ENCODE measurements at regions of chr9 and their contacts with region 1.

Region 1: GRCh38 chr9:71858812-71859211 is 52.2 kb downstream of the ABHD17B start:
- DNase-seq: peak; percentile 3
- H3K4me3 Mint-ChIP-seq: peak overlapping the region; percentile 0
- H3K27ac Mint-ChIP-seq: peak overlapping the region; percentile 51
- H3K4me1 Mint-ChIP-seq: peaks cover 25% of the 10 kb centered on the region
- H3K27me3 Mint-ChIP-seq: no peaks in the 10 kb centered on the region

Region 2: DNA sequence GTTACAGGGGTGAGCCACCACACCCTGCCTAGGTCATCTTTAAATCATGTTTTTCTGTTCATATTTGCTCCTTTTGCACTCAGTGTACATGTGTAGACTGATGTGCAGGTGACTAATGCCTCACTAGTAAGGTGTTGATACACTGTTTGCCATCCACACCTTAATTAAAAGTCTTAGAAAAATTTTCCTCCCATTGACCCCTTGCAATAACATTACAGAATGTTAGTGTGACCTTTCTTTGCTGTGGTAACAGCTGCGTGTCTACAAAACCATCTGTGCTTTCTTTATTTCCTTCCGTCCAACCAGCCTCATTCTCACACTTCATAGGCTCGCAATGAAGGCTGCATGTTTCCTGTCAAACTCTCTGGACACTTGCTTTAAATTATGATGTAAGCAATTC is 83.9 kb before region 1 on chr9:
- intact Hi-C with region 1: no loop called
- DNase-seq: no peak
- H3K4me3 Mint-ChIP-seq: no peak overlapping the region
- H3K27ac Mint-ChIP-seq: no peak overlapping the region
- H3K4me1 Mint-ChIP-seq: peaks cover 8% of the 10 kb centered on the region
- H3K27me3 Mint-ChIP-seq: peaks cover 3% of the 10 kb centered on the region

Region 3: DNA sequence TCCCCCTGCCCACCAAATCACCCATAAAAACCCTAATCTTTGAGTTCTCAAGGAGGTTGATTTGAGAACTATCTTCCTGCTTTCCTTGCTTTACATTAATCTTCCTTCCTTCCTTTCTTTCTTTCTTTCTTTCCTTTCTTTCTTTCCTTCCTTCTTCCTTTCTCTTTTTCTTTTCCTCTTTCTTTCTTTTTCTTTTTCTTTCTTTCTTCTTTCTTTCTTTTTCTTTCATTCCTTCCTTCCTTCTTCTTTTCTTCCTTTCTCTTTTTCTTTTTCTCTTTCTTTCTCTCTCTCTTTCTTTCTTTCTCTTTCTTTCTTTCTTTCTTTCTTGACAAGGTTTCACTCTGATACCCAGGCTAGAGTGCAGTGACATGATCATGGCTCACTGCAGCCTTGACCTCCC is 23.2 kb before region 1 on chr9:
- intact Hi-C with region 1: no loop called
- DNase-seq: no peak
- H3K4me3 Mint-ChIP-seq: no peak overlapping the region
- H3K27ac Mint-ChIP-seq: no peak overlapping the region
- H3K4me1 Mint-ChIP-seq: no peaks in the 10 kb centered on the region
- H3K27me3 Mint-ChIP-seq: peaks cover 30% of the 10 kb centered on the region

Region 4: GRCh38 chr9:71885467-71885866 is 26.7 kb after region 1 on chr9:
- intact Hi-C with region 1: loop called (anchors 1 kb)
- DNase-seq: no peak
- H3K4me3 Mint-ChIP-seq: peak overlapping the region; percentile 12
- H3K27ac Mint-ChIP-seq: peak overlapping the region; percentile 71
- H3K4me1 Mint-ChIP-seq: peaks cover 39% of the 10 kb centered on the region
- H3K27me3 Mint-ChIP-seq: no peaks in the 10 kb centered on the region